CD4-positive, alpha-beta T cell (primary cell): ENCODE measurements at regions of chrX and their contacts with region 1.

Region 1: GRCh38 chrX:46561824-46562657 is 11.5 kb upstream of the CHST7 start:
- DNase-seq: peak in 1 of 14 experiments; percentile 19
- ATAC-seq: no peak
- H3K4me3 ChIP-seq: no peak overlapping the region
- H3K4me3 Mint-ChIP-seq: no peak overlapping the region
- H3K27ac ChIP-seq: no peak overlapping the region
- H3K27ac Mint-ChIP-seq: no peak overlapping the region
- H3K4me1 ChIP-seq: no peaks in the 10 kb centered on the region
- H3K4me1 Mint-ChIP-seq: no peaks in the 10 kb centered on the region
- H3K27me3 ChIP-seq: no peaks in the 10 kb centered on the region
- H3K27me3 Mint-ChIP-seq: no peaks in the 10 kb centered on the region
- CTCF ChIP-seq: no peak

Region 2: DNA sequence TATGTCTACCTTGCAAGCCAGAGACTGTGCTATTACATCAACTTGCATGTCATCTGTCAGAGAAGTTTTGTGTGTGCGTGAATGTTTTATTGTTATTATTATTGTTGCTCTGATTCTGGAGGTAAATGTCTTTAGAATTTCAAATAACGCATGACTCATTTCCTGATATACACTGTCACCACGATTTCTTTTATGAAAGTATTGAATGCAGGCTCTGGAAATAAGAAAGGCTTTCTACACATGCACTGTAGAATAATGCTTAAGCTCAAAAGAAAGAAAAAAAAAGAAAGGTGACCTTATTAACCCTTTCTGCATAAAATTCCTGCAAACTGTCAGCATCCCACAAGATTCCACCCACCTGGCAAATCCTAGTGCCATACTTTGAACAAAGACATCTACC is 649.7 kb before region 1 on chrX:
- CTCF ChIA-PET with region 1: no interaction called
- POLR2A ChIA-PET with region 1: no interaction called
- intact Hi-C with region 1: no loop called
- DNase-seq: no peak
- ATAC-seq: no peak
- H3K4me3 ChIP-seq: no peak overlapping the region
- H3K4me3 Mint-ChIP-seq: no peak overlapping the region
- H3K27ac ChIP-seq: no peak overlapping the region
- H3K27ac Mint-ChIP-seq: no peak overlapping the region
- H3K4me1 ChIP-seq: no peaks in the 10 kb centered on the region
- H3K4me1 Mint-ChIP-seq: no peaks in the 10 kb centered on the region
- H3K27me3 ChIP-seq: no peaks in the 10 kb centered on the region
- H3K27me3 Mint-ChIP-seq: no peaks in the 10 kb centered on the region
- CTCF ChIP-seq: no peak

Region 3: DNA sequence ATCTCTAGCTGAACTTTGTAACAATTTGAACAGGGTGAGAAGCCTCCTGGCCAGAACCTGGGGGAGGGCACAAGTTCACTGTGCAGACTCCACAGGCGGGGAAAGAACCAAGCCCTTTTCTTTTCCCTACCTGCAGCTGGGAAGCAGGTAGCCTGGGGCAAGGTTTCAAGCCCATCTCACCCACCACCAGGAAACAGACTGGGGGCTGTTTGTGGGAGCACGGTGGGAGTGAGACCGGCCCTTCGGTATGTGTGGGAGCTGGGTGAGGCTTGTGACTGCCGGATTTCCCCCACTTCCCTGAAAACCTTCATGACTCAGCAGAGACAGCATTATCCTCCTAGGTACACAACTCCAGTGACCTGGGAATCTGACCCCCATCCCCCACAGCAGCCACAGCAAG is 228.5 kb before region 1 on chrX:
- CTCF ChIA-PET with region 1: no interaction called
- POLR2A ChIA-PET with region 1: no interaction called
- intact Hi-C with region 1: no loop called
- DNase-seq: no peak
- ATAC-seq: no peak
- H3K4me3 ChIP-seq: no peak overlapping the region
- H3K4me3 Mint-ChIP-seq: no peak overlapping the region
- H3K27ac ChIP-seq: no peak overlapping the region
- H3K27ac Mint-ChIP-seq: no peak overlapping the region
- H3K4me1 ChIP-seq: no peaks in the 10 kb centered on the region
- H3K4me1 Mint-ChIP-seq: no peaks in the 10 kb centered on the region
- H3K27me3 ChIP-seq: no peaks in the 10 kb centered on the region
- H3K27me3 Mint-ChIP-seq: no peaks in the 10 kb centered on the region
- CTCF ChIP-seq: no peak

Region 4: GRCh38 chrX:46461653-46462191 is 100.3 kb before region 1 on chrX:
- CTCF ChIA-PET with region 1: no interaction called
- POLR2A ChIA-PET with region 1: no interaction called
- intact Hi-C with region 1: no loop called
- DNase-seq: no peak
- ATAC-seq: no peak
- H3K4me3 ChIP-seq: no peak overlapping the region
- H3K4me3 Mint-ChIP-seq: no peak overlapping the region
- H3K27ac ChIP-seq: no peak overlapping the region
- H3K27ac Mint-ChIP-seq: peak overlapping the region; percentile 45
- H3K4me1 ChIP-seq: no peaks in the 10 kb centered on the region
- H3K4me1 Mint-ChIP-seq: peaks cover 14% of the 10 kb centered on the region
- H3K27me3 ChIP-seq: no peaks in the 10 kb centered on the region
- H3K27me3 Mint-ChIP-seq: no peaks in the 10 kb centered on the region
- CTCF ChIP-seq: no peak

Region 5: GRCh38 chrX:46642145-46642544 is 80.1 kb after region 1 on chrX:
- CTCF ChIA-PET with region 1: no interaction called
- POLR2A ChIA-PET with region 1: no interaction called
- intact Hi-C with region 1: loop called in 1 of 2 experiments (anchors 2 kb)
- DNase-seq: peak in 4 of 14 experiments; percentile 20 to 57 (median 52)
- ATAC-seq: peak; percentile 73
- H3K4me3 ChIP-seq: no peak overlapping the region
- H3K4me3 Mint-ChIP-seq: no peak overlapping the region
- H3K27ac ChIP-seq: no peak overlapping the region
- H3K27ac Mint-ChIP-seq: no peak overlapping the region
- H3K4me1 ChIP-seq: peaks cover 5% of the 10 kb centered on the region
- H3K4me1 Mint-ChIP-seq: peaks cover 5% of the 10 kb centered on the region
- H3K27me3 ChIP-seq: no peaks in the 10 kb centered on the region
- H3K27me3 Mint-ChIP-seq: no peaks in the 10 kb centered on the region
- CTCF ChIP-seq: peak; percentile 52